BJ (cell line): ENCODE measurements at regions of chr1 and their contacts with region 1.

Region 1: DNA sequence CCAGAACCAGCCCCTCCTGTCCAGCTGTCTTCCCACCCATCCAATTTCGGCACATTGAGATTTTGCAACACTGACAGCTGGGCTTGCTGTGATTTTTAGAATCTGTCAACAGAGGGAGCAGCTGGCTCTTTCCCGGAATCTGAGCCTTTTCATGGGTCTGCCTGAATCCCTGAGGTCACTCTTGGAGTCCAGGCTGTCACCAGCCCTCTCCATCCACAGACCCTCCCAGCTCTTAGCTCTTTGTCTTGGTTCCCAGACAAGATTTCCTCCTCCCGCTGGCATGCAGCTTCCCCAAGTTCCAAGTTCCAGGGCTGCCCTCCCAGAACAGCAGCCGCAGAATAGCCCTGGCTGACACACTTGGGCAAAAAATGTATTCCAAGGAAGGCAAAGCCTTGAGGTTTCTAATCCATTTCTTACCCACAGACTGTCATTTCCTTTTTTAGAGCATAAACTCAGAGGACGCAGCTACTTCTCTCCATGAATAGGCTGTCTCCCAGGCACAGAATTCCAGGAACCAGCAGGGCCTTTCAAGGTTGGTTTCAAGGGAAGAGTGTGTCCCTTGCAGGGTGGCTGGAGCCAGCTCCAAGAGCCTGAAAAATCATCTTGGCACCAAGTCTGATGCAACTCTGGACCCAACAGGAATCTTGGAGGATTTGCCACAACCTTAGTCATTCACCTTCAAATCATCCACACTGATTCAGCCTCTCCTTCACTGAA is 7.1 kb upstream of the TMEM61 start:
- DNase-seq: no peak
- H3K4me3 ChIP-seq: no peak overlapping the region
- H3K27me3 ChIP-seq: no peaks in the 10 kb centered on the region
- CTCF ChIP-seq: peak; percentile 62

Region 2: DNA sequence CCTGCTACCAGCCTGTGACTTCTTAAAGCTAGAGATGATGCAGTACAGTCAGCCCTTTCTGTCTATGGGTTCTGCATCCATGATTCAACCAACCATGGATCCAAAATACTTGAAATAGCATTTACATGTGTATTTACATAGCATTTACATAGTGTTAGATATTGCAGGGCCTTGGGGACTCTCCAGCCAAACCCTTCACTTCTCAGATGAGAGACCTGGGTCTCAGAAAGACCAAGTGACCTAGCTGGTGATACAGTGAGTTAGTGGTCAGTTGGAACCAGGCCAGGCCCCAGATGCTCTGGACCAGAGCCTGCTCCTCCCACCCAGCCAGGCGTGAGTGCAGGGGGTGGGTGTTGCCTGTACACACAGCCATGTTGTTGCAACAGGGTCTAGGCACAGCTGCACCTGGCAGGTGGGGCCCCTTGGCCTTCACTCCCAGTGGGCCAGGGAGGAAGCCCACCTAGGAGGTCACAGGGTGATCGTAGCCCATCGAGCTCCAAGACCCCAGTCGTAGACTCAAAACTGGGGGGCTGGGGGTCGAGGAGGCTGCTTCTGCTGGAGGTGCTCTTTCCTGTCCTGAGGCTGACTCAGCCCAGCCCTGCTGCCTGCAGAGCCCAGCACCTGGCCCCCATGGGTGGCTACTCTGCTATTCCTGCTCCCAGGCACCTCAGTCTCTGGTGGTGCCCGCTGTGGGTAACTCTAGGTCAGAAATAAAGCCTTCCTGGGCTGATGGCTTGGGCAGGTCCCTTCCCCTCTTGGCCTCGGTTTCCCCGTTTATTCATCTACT is 14.7 kb after region 1 on chr1:
- CTCF ChIA-PET with region 1: interaction called, 10 read pairs
- POLR2A ChIA-PET with region 1: no interaction called
- DNase-seq: no peak
- H3K4me3 ChIP-seq: no peak overlapping the region
- H3K27me3 ChIP-seq: peaks cover 8% of the 10 kb centered on the region
- CTCF ChIP-seq: no peak